BJ (cell line): ENCODE measurements at regions of chr5 and their contacts with region 1.

Region 1: GRCh38 chr5:54761213-54761701 is 224.1 kb downstream of the ESM1 start:
- DNase-seq: peak; percentile 93
- H3K4me3 ChIP-seq: no peak overlapping the region
- H3K27me3 ChIP-seq: no peaks in the 10 kb centered on the region
- CTCF ChIP-seq: no peak

Region 2: DNA sequence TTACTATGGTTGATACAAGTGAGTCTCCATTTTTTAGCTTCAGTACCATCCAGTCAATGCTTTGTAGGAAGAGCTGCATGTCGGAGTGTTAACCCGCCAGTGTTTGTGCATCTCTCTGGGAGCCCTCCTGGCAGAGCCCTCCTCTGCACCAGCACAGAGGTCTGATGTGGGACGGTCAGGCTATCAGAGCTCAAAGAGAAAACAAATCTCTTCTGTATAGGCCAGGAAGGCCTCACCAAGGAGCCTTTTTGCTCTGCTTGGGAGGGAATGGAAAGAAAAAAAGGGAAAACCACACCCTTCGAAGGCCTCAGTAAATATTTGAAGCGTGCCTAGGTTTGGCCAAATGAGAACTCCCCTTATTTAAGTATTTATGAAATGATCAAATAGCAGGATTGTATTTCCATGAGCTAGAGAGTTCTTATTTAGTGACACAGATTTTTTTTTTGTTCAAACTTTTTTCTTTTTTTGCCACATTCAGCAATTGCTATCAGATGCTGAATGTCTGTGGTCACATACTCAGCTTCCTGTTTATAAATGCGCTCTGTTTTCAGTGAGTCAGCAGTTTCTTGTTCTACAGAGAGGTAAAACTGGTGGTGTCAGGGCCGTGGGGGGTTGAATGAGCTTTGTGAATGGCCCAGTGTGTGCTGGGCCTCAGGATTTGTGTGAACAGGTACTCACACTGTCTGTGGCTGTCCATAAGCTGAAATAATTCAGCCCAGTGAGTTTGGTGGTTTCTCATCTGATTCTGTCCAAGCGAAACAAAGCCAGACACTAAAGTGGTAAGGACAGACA is 17.1 kb before region 1 on chr5:
- CTCF ChIA-PET with region 1: interaction called, 12 read pairs
- POLR2A ChIA-PET with region 1: interaction called, 9 read pairs
- DNase-seq: peak; percentile 98
- H3K4me3 ChIP-seq: no peak overlapping the region
- H3K27me3 ChIP-seq: no peaks in the 10 kb centered on the region
- CTCF ChIP-seq: no peak